Activated B cell treated with CpG ODN at 0.5 μM for 24 hours (primary cell): ENCODE measurements at regions of chr10 and their contacts with region 1.

Region 1: DNA sequence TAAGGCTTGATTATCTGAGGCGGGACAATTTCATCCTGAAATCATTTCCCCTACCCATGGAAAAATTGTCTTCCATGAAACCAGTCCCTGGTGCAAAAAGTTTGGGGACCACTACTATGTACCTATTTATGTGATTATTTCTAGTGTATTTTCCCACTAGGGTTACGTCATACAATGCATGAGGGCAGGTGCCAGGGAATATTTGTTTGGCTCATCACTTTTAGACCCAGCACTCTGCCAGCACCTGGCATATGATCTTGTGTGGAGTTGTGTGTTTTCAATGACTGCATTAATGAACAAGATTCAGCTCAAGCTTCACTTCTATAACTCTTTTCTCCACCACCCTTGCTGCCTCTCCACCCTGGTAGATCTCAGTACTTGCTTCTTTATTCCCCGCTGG is 73.3 kb upstream of the TNKS2 start:
- DNase-seq: no peak
- ATAC-seq: no peak
- H3K4me3 Mint-ChIP-seq: no peak overlapping the region
- H3K27ac Mint-ChIP-seq: no peak overlapping the region
- H3K4me1 Mint-ChIP-seq: no peaks in the 10 kb centered on the region
- H3K27me3 Mint-ChIP-seq: no peaks in the 10 kb centered on the region
- CTCF ChIP-seq: no peak

Region 2: DNA sequence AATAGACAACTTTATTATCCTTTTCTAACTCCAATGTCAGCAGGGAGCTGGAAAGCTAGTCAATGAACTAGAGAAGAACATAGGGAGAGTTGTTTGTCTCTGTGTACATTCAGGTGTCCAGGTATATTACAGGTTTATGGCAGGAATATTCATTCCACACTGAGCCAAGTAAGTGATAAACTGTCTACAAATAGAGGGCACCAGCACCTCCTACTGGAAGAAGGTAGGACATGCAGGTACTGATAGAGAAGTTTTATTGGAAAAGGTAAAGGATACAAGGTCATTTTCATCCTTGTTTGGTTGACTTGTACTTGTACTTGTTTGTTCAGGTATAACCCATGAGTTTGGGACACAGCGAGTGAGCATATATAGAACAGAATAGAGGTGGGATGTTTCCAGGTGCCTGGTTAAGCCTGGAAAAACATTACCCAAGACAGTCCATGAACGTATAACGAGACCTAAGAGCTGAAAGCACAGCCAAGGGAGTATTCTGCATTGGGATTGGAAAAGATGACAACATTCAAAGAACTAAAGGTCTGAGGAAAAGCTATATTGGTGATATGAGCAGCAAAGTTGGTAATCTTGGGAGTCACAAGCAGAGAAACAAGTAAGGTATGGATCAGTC is 30.7 kb before region 1 on chr10:
- CTCF ChIA-PET with region 1: no interaction called
- POLR2A ChIA-PET with region 1: no interaction called
- intact Hi-C with region 1: no loop called
- DNase-seq: no peak
- ATAC-seq: no peak
- H3K4me3 Mint-ChIP-seq: no peak overlapping the region
- H3K27ac Mint-ChIP-seq: no peak overlapping the region
- H3K4me1 Mint-ChIP-seq: no peaks in the 10 kb centered on the region
- H3K27me3 Mint-ChIP-seq: peaks cover 3% of the 10 kb centered on the region
- CTCF ChIP-seq: no peak

Region 3: GRCh38 chr10:91711885-91712680 is 12.8 kb before region 1 on chr10:
- CTCF ChIA-PET with region 1: no interaction called
- POLR2A ChIA-PET with region 1: no interaction called
- intact Hi-C with region 1: loop called (anchors 1 kb)
- DNase-seq: no peak
- ATAC-seq: no peak
- H3K4me3 Mint-ChIP-seq: no peak overlapping the region
- H3K27ac Mint-ChIP-seq: no peak overlapping the region
- H3K4me1 Mint-ChIP-seq: no peaks in the 10 kb centered on the region
- H3K27me3 Mint-ChIP-seq: peaks cover 12% of the 10 kb centered on the region
- CTCF ChIP-seq: no peak